Dendritic cell treated with granulocyte-macrophage colony-stimulating factor and Interleukin-4, amounts not matched to agents 40 ng/mL and 50 ng/mL, for 4 days (primary cell): ENCODE measurements at regions of chr7 and their contacts with region 1.

Region 1: DNA sequence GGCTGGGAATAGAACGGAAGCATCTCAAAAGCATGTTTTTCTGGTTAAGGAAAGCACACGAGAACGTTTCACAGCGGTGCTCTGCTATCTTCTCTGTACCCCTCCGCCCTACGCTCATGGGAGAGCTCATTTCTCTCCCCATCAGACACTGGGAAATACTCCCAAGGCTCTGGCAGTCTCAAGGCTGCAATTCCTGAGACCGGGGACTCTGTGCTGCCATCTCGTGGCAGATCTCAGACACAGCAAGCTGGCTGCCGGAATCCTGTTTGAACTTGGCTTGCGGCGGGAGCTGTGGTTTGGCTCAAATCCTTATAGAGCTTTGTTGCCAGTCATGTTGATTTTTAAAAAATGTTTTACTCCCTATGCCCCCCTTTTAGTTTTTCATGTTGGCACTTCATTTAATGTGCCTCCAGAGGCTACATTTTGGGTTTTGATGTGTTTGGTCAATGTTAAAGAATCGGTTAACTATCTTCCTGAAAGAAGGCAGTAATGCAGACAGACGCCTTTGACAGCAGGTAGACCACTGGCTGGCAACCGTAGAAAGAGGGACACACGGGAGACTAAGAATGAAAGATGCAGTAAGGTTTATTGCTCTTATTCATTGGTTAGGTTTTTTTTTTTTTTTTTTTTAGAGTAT is 27.6 kb downstream of the BMPER start:
- H3K4me3 Mint-ChIP-seq: no peak overlapping the region
- H3K27ac Mint-ChIP-seq: no peak overlapping the region
- H3K4me1 Mint-ChIP-seq: no peaks in the 10 kb centered on the region
- H3K27me3 Mint-ChIP-seq: peaks cover 1% of the 10 kb centered on the region

Region 2: GRCh38 chr7:32694182-32694581 is 1238.8 kb before region 1 on chr7:
- intact Hi-C with region 1: loop called (anchors 10 kb)
- H3K4me3 Mint-ChIP-seq: no peak overlapping the region
- H3K27ac Mint-ChIP-seq: no peak overlapping the region
- H3K4me1 Mint-ChIP-seq: peaks cover 11% of the 10 kb centered on the region
- H3K27me3 Mint-ChIP-seq: no peaks in the 10 kb centered on the region

Region 3: GRCh38 chr7:34025600-34025999 is 92.7 kb after region 1 on chr7:
- intact Hi-C with region 1: no loop called
- H3K4me3 Mint-ChIP-seq: no peak overlapping the region
- H3K27ac Mint-ChIP-seq: no peak overlapping the region
- H3K4me1 Mint-ChIP-seq: no peaks in the 10 kb centered on the region
- H3K27me3 Mint-ChIP-seq: no peaks in the 10 kb centered on the region